Lower lobe of right lung (tissue), 2 donors: ENCODE measurements at regions of chr2 and their contacts with region 1.

Region 1: GRCh38 chr2:85813982-85814801 is 60.4 kb downstream of the ATOH8 start:
- DNase-seq: peak; percentile 93
- ATAC-seq: peak; percentile 94 to 95
- H3K4me3 ChIP-seq: no peak overlapping the region
- H3K27ac ChIP-seq: no peak overlapping the region
- H3K4me1 ChIP-seq: peaks cover 27% of the 10 kb centered on the region
- H3K27me3 ChIP-seq: no peaks in the 10 kb centered on the region
- CTCF ChIP-seq: peak; percentile 96

Region 2: DNA sequence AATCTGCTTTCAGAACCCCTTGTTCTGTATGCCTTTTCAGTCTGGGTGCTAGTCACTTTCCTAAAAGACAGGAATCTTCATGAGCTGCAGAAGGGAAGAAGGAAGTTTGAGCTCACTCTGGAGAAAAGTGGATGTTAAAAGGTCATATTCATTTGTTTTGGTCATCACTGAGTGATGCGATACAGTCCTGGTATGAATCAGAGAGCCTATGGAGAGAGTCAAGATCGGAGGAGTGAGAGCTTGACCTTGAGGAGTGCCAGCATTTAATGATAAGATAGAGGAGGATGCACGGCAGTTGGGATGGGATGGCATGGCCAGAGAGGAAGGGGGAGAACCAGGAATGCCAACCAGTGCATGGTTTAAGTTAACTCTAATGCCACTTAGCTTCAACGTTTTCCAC is 178.6 kb before region 1 on chr2:
- intact Hi-C with region 1: loop called (anchors 10 kb)
- DNase-seq: no peak
- ATAC-seq: no peak
- H3K4me3 ChIP-seq: no peak overlapping the region
- H3K27ac ChIP-seq: no peak overlapping the region
- H3K4me1 ChIP-seq: peaks cover 6% of the 10 kb centered on the region
- H3K27me3 ChIP-seq: no peaks in the 10 kb centered on the region
- CTCF ChIP-seq: no peak

Region 3: DNA sequence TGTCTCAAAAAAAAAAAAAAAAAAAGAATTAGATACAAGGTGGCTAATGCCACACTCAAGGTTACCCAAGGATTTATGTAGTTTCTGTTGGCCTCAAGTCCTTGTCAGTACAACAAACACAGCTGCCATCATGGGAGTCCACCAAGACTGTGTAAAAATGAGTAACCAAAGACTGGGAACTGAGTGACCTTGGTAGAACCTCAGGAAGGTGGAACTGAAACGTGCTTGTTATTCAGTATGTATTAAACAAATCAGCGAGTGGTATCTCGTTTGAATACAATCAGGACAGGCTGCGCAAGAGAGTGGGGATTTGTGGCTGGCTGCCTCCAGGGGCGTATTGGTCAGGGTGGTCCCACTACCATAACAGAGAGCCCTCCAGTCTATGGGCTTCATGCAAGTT is 144.6 kb before region 1 on chr2:
- intact Hi-C with region 1: no loop called
- DNase-seq: no peak
- ATAC-seq: no peak
- H3K4me3 ChIP-seq: no peak overlapping the region
- H3K27ac ChIP-seq: peak overlapping the region; percentile 98
- H3K4me1 ChIP-seq: peaks cover 25% of the 10 kb centered on the region
- H3K27me3 ChIP-seq: no peaks in the 10 kb centered on the region
- CTCF ChIP-seq: no peak

Region 4: DNA sequence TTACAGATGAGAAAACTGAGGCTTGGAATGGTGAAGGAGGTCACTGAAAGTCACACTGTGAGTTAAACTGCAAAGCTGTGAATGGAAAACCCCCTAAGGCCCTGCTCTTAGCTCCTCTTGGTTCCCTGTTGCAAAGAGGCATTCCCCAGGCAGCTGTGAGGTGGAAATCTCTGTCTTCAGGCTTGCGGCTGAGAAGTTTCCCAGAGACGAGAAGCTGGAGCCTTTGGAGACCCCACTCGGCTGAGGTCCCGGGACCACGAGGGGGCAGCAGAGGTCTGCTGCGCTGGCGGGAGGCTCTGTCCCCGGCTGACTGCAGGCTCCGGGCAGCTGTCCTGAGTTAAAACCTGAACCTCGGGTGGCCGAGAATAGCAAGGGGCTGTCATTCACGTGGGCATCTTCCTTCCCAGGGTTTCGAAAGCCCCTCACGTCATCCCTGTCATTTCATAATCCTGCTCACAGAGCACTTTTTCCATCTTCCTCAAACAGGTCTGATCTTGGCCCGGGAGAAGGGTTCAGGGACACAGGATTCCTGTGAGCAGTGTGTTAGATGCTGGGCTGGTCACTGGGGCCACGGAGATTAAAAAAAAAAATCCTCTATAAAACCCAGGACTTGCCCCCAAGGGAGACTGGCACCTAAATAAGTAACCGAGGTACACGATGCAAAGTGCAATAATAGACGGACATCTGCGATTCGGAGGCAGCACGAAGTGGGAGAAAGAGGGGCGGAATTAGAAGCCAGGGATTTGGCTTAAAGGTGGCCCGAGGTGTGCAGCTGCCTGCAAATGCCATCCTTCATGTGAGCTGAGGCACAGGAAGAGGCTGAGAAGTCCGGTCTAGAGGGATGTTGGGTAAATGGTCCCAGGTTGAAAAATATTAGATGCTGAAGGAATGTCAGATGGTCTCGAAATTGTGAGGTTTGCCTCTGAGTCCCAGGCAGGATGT is 85.0 kb before region 1 on chr2:
- intact Hi-C with region 1: loop called (anchors 10 kb)
- DNase-seq: peak; percentile 92
- ATAC-seq: peak; percentile 95
- H3K4me3 ChIP-seq: no peak overlapping the region
- H3K27ac ChIP-seq: peak overlapping the region; percentile 58
- H3K4me1 ChIP-seq: peaks cover 51% of the 10 kb centered on the region
- H3K27me3 ChIP-seq: no peaks in the 10 kb centered on the region
- CTCF ChIP-seq: peak; percentile 96